Transverse colon (tissue), 4 donors: ENCODE measurements at regions of chr3 and their contacts with region 1.

Region 1: DNA sequence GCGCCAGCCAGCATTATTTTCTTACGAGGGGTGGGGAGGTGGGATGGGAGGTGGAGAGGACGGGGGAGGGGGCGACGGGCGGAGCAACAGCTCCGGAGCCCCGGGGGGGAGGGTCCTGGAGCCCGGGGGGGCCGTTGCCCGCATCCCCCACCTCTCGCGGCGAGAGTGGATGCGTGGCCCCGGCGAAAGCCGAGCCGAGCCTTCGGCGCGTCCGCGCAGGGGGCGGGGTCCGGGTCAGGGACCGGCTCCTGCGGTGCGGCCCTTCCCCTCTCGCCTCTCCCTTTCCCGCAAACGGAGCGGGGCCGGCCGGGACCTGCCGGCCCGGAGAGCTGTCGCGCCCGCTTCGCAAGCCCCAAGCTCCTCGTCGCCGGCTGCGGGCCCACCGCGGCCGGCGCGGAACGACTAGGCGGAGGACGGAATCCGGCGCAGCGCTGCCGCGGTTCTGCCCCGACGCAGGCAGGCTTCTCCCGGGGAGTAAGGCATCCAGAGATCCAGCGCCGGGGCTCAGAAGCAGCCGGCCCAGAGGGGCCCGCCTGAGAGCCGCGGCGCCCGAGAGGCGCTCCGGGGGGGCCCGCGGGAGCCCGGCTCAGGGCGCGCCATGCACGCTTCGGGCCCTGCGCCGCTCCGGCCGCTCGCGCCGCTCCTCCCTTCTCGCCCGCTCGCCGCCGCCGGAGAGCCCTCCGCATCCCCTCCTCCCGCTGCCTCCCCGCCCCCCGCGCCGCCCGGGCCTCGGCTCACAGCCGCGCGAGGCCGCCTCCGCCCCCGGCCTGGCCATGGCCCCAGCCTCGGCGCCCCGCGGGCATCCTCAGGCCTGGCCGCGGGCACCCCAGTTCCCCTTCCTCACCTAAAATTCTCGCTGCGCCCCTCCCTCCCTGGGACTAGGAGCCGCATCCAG is 459 bp upstream of the ADCY5 start:
- DNase-seq: peak; percentile 26
- H3K4me3 ChIP-seq: peak overlapping the region; percentile 59 to 82 (median 68)
- H3K27ac ChIP-seq: peak overlapping the region; percentile 83 to 90 (median 88)
- H3K4me1 ChIP-seq: peaks cover 0 to 25% (median 18%) of the 10 kb centered on the region in 4 donors
- H3K27me3 ChIP-seq: peaks cover 62% of the 10 kb centered on the region
- CTCF ChIP-seq: no peak
- EP300 ChIP-seq: no peak
- POLR2A ChIP-seq: no peak

Region 2: GRCh38 chr3:123375014-123375940 is 74.1 kb before region 1 on chr3:
- in situ Hi-C with region 1: no loop called
- intact Hi-C with region 1: loop called (anchors 10 kb)
- DNase-seq: no peak
- H3K4me3 ChIP-seq: no peak overlapping the region
- H3K27ac ChIP-seq: peak overlapping the region; percentile 37 to 81 (median 63)
- H3K4me1 ChIP-seq: peaks cover 5 to 42% (median 16%) of the 10 kb centered on the region in 4 donors
- H3K27me3 ChIP-seq: no peaks in the 10 kb centered on the region
- CTCF ChIP-seq: no peak
- EP300 ChIP-seq: no peak
- POLR2A ChIP-seq: no peak